Body of pancreas (tissue), 4 donors: ENCODE measurements at regions of chr7 and their contacts with region 1.

Region 1: DNA sequence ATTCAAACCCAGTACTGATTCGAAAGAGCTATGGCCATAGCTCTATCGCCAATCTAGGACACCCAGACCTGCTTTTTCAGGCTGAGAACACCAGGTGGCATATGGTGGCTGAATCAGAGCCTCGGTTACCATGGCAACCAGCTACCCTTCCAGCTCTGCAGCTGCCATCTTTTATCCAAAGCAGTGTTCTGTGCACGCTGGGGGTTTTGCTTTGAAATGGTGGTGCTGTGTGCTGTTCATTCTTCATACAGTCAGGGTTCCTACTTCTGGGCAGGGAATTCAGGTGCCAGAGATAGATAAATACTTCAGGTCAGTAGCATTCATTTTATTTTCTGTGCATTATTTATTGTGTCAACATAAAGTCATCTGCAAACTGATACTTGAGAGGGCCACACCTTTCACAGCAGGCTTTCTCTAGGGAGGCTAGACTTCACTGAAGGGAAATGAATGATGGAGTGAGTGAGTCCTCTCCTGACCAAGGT is 85.4 kb downstream of the AKR1D1 start:
- DNase-seq: peak; percentile 87 to 96 (median 94)
- ATAC-seq: peak; percentile 95
- H3K4me3 ChIP-seq: no peak overlapping the region
- H3K27ac ChIP-seq: no peak overlapping the region
- H3K4me1 ChIP-seq: no peaks in the 10 kb centered on the region
- H3K27me3 ChIP-seq: no peaks in the 10 kb centered on the region
- CTCF ChIP-seq: peak; percentile 18 to 83 (median 77)
- POLR2A ChIP-seq: no peak

Region 2: DNA sequence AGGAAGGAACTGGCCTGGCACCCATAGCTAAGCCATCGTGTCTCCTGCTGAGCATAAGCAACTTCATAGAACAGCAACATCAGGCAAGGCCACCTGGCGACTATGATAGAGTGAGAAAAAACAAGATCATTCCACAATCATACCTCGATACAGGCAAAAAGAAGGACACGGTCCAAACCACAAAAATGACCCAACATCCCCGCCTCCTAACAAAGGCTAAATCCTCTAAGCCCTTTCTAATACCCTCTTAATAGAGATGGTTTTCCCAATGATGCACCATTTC is 579.8 kb after region 1 on chr7:
- intact Hi-C with region 1: loop called (anchors 5 kb)
- DNase-seq: no peak
- ATAC-seq: no peak
- H3K4me3 ChIP-seq: no peak overlapping the region
- H3K27ac ChIP-seq: no peak overlapping the region
- H3K4me1 ChIP-seq: no peaks in the 10 kb centered on the region
- H3K27me3 ChIP-seq: no peaks in the 10 kb centered on the region
- CTCF ChIP-seq: no peak
- POLR2A ChIP-seq: no peak